Cardiac septum (tissue), 1 donor: ENCODE measurements at regions of chr9 and their contacts with region 1.

Region 1: GRCh38 chr9:133149126-133150107 is 14.3 kb downstream of the GBGT1 start:
- DNase-seq: peak; percentile 92

Region 2: DNA sequence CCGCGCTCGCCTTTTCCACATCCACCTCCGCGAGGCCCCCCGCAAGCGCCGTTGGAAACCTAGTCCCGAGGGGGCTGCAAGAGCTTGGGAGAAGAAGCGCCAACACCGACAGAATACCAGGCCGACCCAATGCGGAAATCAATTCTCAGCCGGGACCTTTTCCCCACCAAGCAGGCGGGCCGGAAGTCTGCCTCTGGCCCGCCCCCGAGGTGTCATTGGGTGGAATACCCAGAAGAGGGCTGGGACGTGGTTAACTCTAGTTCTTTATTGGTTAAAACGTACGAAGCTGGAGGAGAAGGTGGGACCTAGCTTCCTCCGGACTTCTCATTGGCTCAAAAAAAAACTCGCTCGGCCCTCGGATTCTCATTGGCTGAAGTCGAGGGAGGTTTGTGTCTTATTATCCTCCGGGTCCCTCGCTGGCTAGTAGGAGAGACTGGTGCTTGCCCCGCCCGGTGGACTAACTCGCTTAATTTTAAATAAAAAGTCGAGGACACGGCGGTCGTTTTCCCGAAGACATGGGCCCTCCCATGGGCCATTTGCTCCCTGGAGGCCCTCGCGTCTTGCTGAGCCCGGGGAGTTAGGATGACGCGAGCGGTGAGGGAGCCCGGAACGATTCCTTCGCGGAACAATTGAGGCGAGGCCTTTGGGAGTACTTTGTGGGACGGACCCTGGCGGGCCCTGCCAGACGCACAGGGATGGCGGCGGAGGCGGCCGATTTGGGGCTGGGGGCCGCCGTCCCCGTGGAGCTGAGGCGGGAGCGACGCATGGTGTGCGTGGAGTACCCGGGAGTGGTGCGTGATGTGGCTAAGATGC is 118.9 kb before region 1 on chr9 and contains the start of gene GTF3C5:
- intact Hi-C with region 1: loop called (anchors 5 kb)
- DNase-seq: peak; percentile 96
- total RNA-seq, gene GTF3C5: 27.6 TPM

Region 3: DNA sequence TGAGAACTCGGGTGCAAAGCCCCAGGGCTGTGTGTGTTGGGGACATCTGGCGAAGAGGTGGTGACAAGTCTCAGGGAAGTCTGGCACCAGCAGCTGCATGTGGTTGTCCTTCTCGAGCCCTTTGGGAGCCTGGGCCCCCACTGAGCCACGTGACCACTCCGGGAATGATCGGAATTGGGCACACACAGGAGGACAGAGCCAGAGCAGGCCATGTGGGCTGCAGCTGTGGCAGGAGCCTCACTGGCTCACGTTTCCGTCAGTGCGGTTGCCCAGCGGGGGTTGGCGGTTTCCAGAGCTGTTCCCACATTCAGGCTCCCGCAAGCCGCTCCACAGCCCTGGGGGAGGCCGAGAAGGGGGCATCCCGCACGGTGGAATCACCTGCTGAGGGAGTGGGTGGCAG is 94.5 kb before region 1 on chr9:
- intact Hi-C with region 1: loop called (anchors 5 kb)
- DNase-seq: peak; percentile 88

Region 4: GRCh38 chr9:133103183-133103986 is 46.0 kb before region 1 on chr9:
- intact Hi-C with region 1: loop called (anchors 1 kb)
- DNase-seq: peak; percentile 89

Region 5: GRCh38 chr9:133121198-133121939 is 28.0 kb before region 1 on chr9 and contains the start of gene RALGDS:
- intact Hi-C with region 1: loop called (anchors 2 kb)
- DNase-seq: peak; percentile 95
- total RNA-seq, gene RALGDS: 23.9 TPM

Region 6: GRCh38 chr9:133184962-133185361 is 35.5 kb after region 1 on chr9:
- intact Hi-C with region 1: no loop called
- DNase-seq: no peak

Region 7: GRCh38 chr9:133406480-133407307 is 257.3 kb after region 1 on chr9:
- intact Hi-C with region 1: no loop called
- DNase-seq: peak; percentile 87